ENCODE measurements at regions of chr6 and their contacts with region 1.

Region 1: GRCh38 chr6:43396407-43397149 is 27.1 kb upstream of the ZNF318 start:
- DNase-seq: no peak
- H3K4me3 Mint-ChIP-seq: no peak overlapping the region
- H3K27ac Mint-ChIP-seq: no peak overlapping the region
- H3K4me1 Mint-ChIP-seq: peaks cover 7% of the 10 kb centered on the region
- H3K27me3 Mint-ChIP-seq: peaks cover 40% of the 10 kb centered on the region

Region 2: GRCh38 chr6:43263314-43264178 is 133.0 kb before region 1 on chr6:
- CTCF ChIA-PET with region 1: interaction called, 16 read pairs
- POLR2A ChIA-PET with region 1: no interaction called
- DNase-seq: peak; percentile 82
- H3K4me3 Mint-ChIP-seq: no peak overlapping the region
- H3K27ac Mint-ChIP-seq: no peak overlapping the region
- H3K4me1 Mint-ChIP-seq: no peaks in the 10 kb centered on the region
- H3K27me3 Mint-ChIP-seq: peaks cover 12% of the 10 kb centered on the region

Region 3: GRCh38 chr6:43383021-43383667 is 13.4 kb before region 1 on chr6:
- CTCF ChIA-PET with region 1: interaction called, 20 read pairs
- POLR2A ChIA-PET with region 1: interaction called, 7 read pairs
- DNase-seq: no peak
- H3K4me3 Mint-ChIP-seq: peak overlapping the region; percentile 6
- H3K27ac Mint-ChIP-seq: peak overlapping the region; percentile 91
- H3K4me1 Mint-ChIP-seq: peaks cover 54% of the 10 kb centered on the region
- H3K27me3 Mint-ChIP-seq: peaks cover 26% of the 10 kb centered on the region